Activated B cell treated with CpG ODN at 0.5 μM for 24 hours (primary cell): ENCODE measurements at regions of chr3 and their contacts with region 1.

Region 1: GRCh38 chr3:71087143-71088018 is 496.1 kb downstream of the FOXP1 start:
- DNase-seq: no peak
- ATAC-seq: peak; percentile 56
- H3K4me3 Mint-ChIP-seq: peak overlapping the region; percentile 54
- H3K27ac Mint-ChIP-seq: peak overlapping the region; percentile 99
- H3K4me1 Mint-ChIP-seq: peaks cover 97% of the 10 kb centered on the region
- H3K27me3 Mint-ChIP-seq: no peaks in the 10 kb centered on the region
- CTCF ChIP-seq: no peak

Region 2: GRCh38 chr3:69084326-69085167 is 2002.8 kb before region 1 on chr3 and contains the start of gene ARL6IP5:
- CTCF ChIA-PET with region 1: no interaction called
- POLR2A ChIA-PET with region 1: no interaction called
- intact Hi-C with region 1: loop called (anchors 10 kb)
- DNase-seq: peak; percentile 76
- ATAC-seq: peak; percentile 72
- H3K4me3 Mint-ChIP-seq: peak within 1 kb of the TSS; percentile 96
- H3K27ac Mint-ChIP-seq: peak within 1 kb of the TSS; percentile 95
- H3K4me1 Mint-ChIP-seq: peaks cover 81% of the 10 kb centered on the region
- H3K27me3 Mint-ChIP-seq: no peaks in the 10 kb centered on the region
- CTCF ChIP-seq: no peak
- total RNA-seq, gene ARL6IP5: 77.5 and 77.8 TPM in 2 replicates

Region 3: GRCh38 chr3:70471464-70472342 is 615.7 kb before region 1 on chr3:
- CTCF ChIA-PET with region 1: no interaction called
- POLR2A ChIA-PET with region 1: no interaction called
- intact Hi-C with region 1: no loop called
- DNase-seq: no peak
- ATAC-seq: no peak
- H3K4me3 Mint-ChIP-seq: no peak overlapping the region
- H3K27ac Mint-ChIP-seq: no peak overlapping the region
- H3K4me1 Mint-ChIP-seq: no peaks in the 10 kb centered on the region
- H3K27me3 Mint-ChIP-seq: no peaks in the 10 kb centered on the region
- CTCF ChIP-seq: no peak

Region 4: GRCh38 chr3:71069797-71070196 is 17.6 kb before region 1 on chr3:
- CTCF ChIA-PET with region 1: interaction called, 7 read pairs
- POLR2A ChIA-PET with region 1: interaction called, 785 read pairs
- intact Hi-C with region 1: loop called (anchors 1 kb)
- DNase-seq: no peak
- ATAC-seq: peak; percentile 44
- H3K4me3 Mint-ChIP-seq: peak overlapping the region; percentile 36
- H3K27ac Mint-ChIP-seq: peak overlapping the region; percentile 79
- H3K4me1 Mint-ChIP-seq: peaks cover 89% of the 10 kb centered on the region
- H3K27me3 Mint-ChIP-seq: no peaks in the 10 kb centered on the region
- CTCF ChIP-seq: no peak

Region 5: DNA sequence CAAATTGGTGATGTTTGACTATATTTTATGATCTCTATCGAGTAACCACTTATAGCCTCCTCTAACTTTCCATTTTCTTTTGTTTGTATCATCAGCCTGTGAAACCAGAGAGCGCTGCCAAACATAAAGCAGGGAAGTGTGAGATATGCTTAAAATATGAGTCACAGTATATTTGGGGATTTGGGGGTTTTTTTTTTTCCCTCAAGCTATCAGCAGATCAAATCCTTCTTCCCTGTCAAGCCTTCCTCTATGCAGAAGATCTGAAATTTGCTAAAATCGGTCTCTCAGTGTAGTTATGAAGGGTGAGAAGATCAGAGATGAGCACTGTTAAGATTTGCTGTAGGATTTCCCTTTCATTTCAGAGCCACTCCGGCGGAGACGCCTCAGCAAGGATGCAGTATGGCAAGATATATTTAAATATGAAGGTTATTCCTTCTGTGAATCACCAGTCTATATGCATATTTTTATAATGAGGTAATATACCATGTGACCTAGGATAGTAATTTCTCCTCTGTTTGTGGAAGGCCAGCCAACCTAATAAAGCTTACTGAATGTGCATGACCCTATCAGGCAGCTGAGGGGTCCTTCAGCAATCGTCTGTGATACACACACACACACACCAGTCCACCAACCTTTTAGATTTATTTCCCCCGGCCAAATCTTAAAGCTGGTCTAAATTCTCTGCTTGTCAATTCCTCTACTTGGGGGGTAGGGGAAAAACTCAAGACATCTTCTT is 22.0 kb after region 1 on chr3:
- CTCF ChIA-PET with region 1: no interaction called
- POLR2A ChIA-PET with region 1: interaction called, 16 read pairs
- intact Hi-C with region 1: no loop called
- DNase-seq: no peak
- ATAC-seq: peak; percentile 60
- H3K4me3 Mint-ChIP-seq: peak overlapping the region; percentile 52
- H3K27ac Mint-ChIP-seq: peak overlapping the region; percentile 90
- H3K4me1 Mint-ChIP-seq: peaks cover 86% of the 10 kb centered on the region
- H3K27me3 Mint-ChIP-seq: no peaks in the 10 kb centered on the region
- CTCF ChIP-seq: no peak

Region 6: GRCh38 chr3:71226565-71227269 is 139.3 kb after region 1 on chr3:
- CTCF ChIA-PET with region 1: no interaction called
- POLR2A ChIA-PET with region 1: interaction called, 9 read pairs
- intact Hi-C with region 1: loop called (anchors 1 kb)
- DNase-seq: peak; percentile 50
- ATAC-seq: peak; percentile 76
- H3K4me3 Mint-ChIP-seq: peak overlapping the region; percentile 89
- H3K27ac Mint-ChIP-seq: peak overlapping the region; percentile 97
- H3K4me1 Mint-ChIP-seq: peaks cover 76% of the 10 kb centered on the region
- H3K27me3 Mint-ChIP-seq: no peaks in the 10 kb centered on the region
- CTCF ChIP-seq: no peak

Region 7: DNA sequence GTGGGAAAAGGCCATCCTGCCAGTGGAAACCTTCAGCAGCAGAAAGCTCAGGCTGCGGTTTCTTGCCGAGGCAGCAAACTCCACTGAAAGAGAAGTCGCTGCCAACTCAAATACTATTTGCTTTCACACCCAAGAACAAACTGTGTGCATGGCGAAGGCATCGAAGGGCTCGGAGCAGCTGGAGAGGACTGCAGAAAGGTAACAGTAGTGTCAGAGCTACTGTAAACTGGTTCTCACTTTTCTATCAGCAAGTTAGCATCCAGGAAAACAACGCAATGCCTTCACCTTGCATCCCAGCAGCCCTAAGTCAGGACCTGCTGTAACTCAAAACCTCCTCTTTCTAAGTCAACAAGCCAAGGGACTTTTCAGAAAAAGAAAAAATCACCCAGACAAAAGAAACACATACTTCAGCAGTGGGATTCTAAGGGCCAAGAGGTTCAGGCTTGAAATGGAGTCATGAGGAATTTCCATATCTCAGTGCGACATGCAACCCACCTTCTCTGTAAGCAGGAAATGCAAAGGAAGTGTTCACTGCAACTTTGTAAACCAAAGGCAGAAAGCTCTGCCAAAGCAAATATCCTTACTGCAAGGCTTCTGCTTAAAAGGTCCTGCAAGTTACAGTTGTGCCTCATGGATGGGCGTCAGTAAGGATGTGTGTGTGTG is 302.7 kb after region 1 on chr3:
- CTCF ChIA-PET with region 1: no interaction called
- POLR2A ChIA-PET with region 1: interaction called, 40 read pairs
- intact Hi-C with region 1: loop called (anchors 1 kb)
- DNase-seq: no peak
- ATAC-seq: peak; percentile 6
- H3K4me3 Mint-ChIP-seq: peak overlapping the region; percentile 73
- H3K27ac Mint-ChIP-seq: peak overlapping the region; percentile 99
- H3K4me1 Mint-ChIP-seq: peaks cover 86% of the 10 kb centered on the region
- H3K27me3 Mint-ChIP-seq: no peaks in the 10 kb centered on the region
- CTCF ChIP-seq: no peak